Left ventricle myocardium inferior (tissue), 1 donor: ENCODE measurements at regions of chr3 and their contacts with region 1.

Region 1: GRCh38 chr3:17258823-17259436 is 374.2 kb downstream of the PLCL2 start:
- DNase-seq: no peak
- H3K4me3 ChIP-seq: no peak overlapping the region
- H3K27ac ChIP-seq: no peak overlapping the region
- H3K4me1 ChIP-seq: peaks cover 3% of the 10 kb centered on the region
- H3K27me3 ChIP-seq: no peaks in the 10 kb centered on the region
- CTCF ChIP-seq: peak; percentile 83

Region 2: DNA sequence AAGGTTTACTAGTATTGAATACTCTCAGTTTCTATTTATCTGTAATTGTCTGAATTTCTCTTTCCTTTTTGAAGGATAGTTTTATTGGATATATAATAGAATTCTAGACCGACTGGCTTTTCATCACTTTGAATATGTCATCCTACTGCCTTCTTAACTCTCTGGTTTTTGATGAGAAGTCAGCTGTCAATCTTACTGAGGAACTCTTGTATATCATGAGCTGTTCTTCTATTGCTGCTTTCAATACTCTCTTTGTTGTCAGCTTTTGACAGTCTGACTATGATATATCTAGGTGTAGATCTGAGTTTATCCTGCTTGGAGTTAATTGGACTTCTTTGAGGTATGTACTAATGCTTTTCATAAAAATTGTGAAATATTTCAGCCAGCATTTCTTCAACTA is 40.3 kb before region 1 on chr3:
- intact Hi-C with region 1: no loop called
- DNase-seq: no peak
- H3K4me3 ChIP-seq: no peak overlapping the region
- H3K27ac ChIP-seq: no peak overlapping the region
- H3K4me1 ChIP-seq: no peaks in the 10 kb centered on the region
- H3K27me3 ChIP-seq: no peaks in the 10 kb centered on the region
- CTCF ChIP-seq: no peak

Region 3: GRCh38 chr3:17412950-17413530 is 154.1 kb after region 1 on chr3:
- intact Hi-C with region 1: loop called (anchors 2 kb)
- DNase-seq: no peak
- H3K4me3 ChIP-seq: no peak overlapping the region
- H3K27ac ChIP-seq: no peak overlapping the region
- H3K4me1 ChIP-seq: no peaks in the 10 kb centered on the region
- H3K27me3 ChIP-seq: no peaks in the 10 kb centered on the region
- CTCF ChIP-seq: peak; percentile 84